ENCODE measurements at regions of chr14 and their contacts with region 1.

Region 1: DNA sequence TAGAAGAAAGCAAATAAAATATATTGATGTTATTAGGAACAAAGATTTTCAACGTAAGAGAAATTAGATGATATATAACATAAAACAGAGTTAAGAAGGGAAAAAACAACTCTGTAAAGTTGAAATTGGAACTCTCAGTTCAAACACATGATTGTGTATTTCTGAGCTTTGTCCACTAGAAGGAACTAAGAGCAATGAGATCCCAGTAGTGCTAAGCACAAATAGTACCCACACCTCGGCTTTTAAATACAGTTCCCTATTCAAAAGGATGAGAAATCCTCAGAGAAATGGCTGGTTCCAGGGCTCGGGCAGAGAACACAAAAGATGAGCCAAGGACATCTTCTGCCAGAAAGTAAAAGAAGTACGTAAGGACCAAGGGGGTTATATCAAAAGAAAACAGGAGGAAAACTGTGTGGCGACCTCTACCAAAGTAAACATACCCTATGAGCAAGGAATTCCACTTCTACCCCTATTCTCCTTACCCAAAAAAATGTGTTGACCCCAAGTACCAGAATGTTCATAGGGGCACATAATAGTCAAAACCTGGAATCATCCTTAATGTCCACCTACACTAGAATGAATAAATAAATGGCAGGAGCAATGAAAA is 96.6 kb downstream of the SPTSSA start:
- DNase-seq: no peak
- H3K4me3 Mint-ChIP-seq: no peak overlapping the region
- H3K27ac Mint-ChIP-seq: no peak overlapping the region
- H3K4me1 Mint-ChIP-seq: peaks cover 62% of the 10 kb centered on the region
- H3K27me3 Mint-ChIP-seq: no peaks in the 10 kb centered on the region
- CTCF ChIP-seq: no peak

Region 2: DNA sequence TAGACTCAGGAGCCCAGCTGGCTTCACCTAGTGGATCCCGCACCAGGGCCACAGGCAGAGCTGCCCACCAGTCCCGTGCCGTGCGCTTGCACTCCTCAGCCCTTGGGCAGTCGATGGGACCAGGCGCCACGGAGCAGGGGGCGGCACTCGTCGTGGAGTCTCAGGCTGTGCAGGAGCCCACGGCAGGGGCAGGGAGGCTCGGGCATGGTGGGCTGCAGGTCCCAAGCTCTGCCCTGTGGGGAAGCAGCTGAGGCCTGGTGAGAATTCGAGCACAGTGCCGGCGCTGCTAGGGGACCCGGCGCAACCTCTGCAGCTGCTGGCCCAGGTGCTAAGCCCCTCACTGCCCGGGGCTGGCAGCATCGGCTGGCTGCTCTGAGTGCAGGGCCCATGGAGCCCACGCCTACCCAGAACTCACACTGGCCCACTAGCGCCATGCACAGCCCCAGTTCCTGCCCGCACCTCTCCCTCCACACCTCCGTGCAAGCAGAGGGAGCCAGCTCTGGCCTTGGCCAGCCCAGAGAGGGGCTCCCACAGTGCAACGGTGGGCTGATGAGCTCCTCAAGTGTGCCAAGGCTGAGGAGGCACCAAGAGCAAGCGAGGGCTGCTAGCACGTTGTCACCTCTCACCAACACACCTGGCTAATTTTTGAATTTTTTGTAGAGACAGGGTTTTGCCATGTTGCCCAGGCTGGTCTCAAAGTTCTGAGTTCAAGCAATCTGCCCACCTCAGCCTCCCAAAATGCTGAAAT is 19.5 kb before region 1 on chr14:
- CTCF ChIA-PET with region 1: no interaction called
- POLR2A ChIA-PET with region 1: no interaction called
- intact Hi-C with region 1: no loop called
- DNase-seq: no peak
- H3K4me3 Mint-ChIP-seq: no peak overlapping the region
- H3K27ac Mint-ChIP-seq: no peak overlapping the region
- H3K4me1 Mint-ChIP-seq: no peaks in the 10 kb centered on the region
- H3K27me3 Mint-ChIP-seq: no peaks in the 10 kb centered on the region
- CTCF ChIP-seq: no peak

Region 3: GRCh38 chr14:34379816-34380463 is 14.5 kb after region 1 on chr14:
- CTCF ChIA-PET with region 1: no interaction called
- POLR2A ChIA-PET with region 1: interaction called, 10 read pairs
- intact Hi-C with region 1: no loop called
- DNase-seq: no peak
- H3K4me3 Mint-ChIP-seq: peak overlapping the region; percentile 20
- H3K27ac Mint-ChIP-seq: peak overlapping the region; percentile 69
- H3K4me1 Mint-ChIP-seq: peaks cover 13% of the 10 kb centered on the region
- H3K27me3 Mint-ChIP-seq: no peaks in the 10 kb centered on the region
- CTCF ChIP-seq: no peak

Region 4: DNA sequence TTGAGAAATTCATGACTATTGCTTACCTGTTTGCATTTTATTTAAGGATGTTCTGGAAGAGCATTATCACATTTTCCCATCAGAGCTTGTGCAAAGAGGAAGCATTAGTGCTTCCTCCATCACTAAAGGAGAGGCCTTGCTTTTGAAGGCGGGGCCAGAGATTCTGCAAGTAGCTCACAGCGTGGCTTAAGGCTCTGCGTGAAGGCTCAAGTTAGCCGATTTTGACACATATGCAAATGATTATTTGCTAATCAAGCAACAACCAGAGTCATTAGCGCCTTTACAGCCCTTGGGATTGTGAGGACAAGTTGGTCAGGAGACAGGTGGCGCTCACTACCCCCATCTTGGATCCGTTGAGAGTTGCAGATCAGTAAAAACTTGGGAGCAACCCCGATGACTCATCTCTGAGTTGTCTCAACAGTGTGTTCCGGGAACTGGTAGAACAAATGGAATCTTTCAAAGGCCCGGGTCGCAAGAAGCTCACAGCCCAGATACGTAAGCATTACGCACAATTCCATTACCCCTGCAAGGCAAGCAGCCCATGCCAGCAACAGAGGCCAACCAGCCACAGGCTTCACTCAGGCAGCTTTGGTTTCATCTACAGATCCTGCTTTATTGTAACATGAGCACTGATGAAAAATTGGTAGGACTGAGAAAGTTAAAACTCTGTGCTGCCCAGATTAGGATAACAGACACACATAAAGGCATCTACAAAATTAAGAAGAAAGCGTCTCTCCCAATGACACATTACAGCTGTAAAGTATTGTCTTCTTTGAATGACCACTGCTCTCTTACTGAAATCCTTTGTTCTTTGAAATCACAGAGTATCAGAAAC is 131.5 kb after region 1 on chr14:
- CTCF ChIA-PET with region 1: interaction called, 23 read pairs
- POLR2A ChIA-PET with region 1: interaction called, 7 read pairs
- intact Hi-C with region 1: loop called (anchors 10 kb)
- DNase-seq: peak; percentile 99
- H3K4me3 Mint-ChIP-seq: peak overlapping the region; percentile 26
- H3K27ac Mint-ChIP-seq: peak overlapping the region; percentile 97
- H3K4me1 Mint-ChIP-seq: peaks cover 18% of the 10 kb centered on the region
- H3K27me3 Mint-ChIP-seq: no peaks in the 10 kb centered on the region
- CTCF ChIP-seq: no peak